ENCODE measurements at regions of chr7 and their contacts with region 1.

Region 1: DNA sequence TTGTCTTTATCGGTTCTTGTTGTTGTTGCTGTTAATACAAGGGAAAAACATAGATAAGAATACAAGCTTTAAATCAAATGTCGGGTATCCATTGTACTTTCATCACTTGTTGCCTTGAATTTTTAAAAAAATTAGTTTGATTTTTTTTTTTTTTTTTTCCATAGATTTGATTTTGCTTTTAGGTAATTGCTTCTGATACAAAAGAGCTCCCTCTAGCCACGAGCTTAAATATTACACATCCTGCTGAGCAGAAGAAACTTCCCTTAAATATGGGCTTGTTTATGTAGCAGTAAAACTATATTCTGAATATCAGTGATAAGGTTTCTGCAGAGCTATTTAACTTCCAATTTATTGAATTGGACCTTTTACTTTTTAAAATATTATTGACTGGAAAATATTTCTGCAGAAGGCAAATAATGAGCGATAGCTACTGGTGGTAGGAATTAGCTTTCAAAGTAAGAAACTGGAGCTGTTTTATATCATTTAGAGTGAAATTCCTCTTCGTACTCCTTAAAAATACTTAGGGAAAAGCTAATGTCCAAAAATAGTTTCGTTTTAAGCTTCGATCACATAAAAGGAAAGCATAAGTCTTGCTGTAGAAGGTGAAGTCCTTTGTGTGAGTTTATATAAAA is 216.9 kb downstream of the POLR1F start:
- DNase-seq: peak; percentile 66
- ATAC-seq: 0 out of 2 replicates have a peak, but pooled peaks have one; percentile 35
- H3K4me3 ChIP-seq: no peak overlapping the region
- H3K27ac ChIP-seq: no peak overlapping the region
- H3K4me1 ChIP-seq: no peaks in the 10 kb centered on the region
- H3K27me3 ChIP-seq: 0 out of 2 replicates have a peak, but pooled peaks cover 4% of the 10 kb centered on the region
- CTCF ChIP-seq: peak; percentile 76

Region 2: GRCh38 chr7:19209166-19209696 is 282.7 kb before region 1 on chr7:
- CTCF ChIA-PET with region 1: interaction called, 12 read pairs
- POLR2A ChIA-PET with region 1: no interaction called
- intact Hi-C with region 1: no loop called
- DNase-seq: no peak
- ATAC-seq: no peak
- H3K4me3 ChIP-seq: no peak overlapping the region
- H3K27ac ChIP-seq: no peak overlapping the region
- H3K4me1 ChIP-seq: no peaks in the 10 kb centered on the region
- H3K27me3 ChIP-seq: no peaks in the 10 kb centered on the region
- CTCF ChIP-seq: no peak

Region 3: DNA sequence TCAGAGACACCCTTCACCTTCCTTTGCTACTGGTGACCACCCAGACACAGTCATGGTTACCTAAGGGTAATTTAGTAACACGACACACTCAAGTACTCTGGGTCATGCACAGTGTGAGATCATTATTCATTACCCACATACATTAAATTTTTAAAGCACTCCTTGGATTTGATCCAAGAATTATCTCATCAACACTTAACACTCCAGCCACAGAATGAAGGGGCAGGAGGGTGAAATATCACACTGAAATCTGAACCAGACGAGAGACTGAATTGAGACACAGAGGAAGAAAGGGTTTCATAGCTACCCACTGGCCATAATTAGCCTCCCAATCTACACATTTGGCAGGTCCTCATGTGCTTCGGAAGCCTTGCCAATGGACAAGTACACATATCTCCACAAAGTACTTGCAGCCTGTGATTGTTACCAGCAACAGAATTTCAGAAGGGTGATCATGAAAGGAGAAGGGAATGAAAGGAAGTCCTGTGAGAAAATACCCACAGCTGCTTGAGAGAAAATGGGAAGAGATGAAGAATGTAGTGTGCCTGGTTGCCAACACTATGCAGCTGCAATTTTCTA is 27.6 kb after region 1 on chr7:
- CTCF ChIA-PET with region 1: interaction called, 12 read pairs
- POLR2A ChIA-PET with region 1: no interaction called
- intact Hi-C with region 1: no loop called
- DNase-seq: no peak
- ATAC-seq: no peak
- H3K4me3 ChIP-seq: no peak overlapping the region
- H3K27ac ChIP-seq: no peak overlapping the region
- H3K4me1 ChIP-seq: peaks cover 10% of the 10 kb centered on the region
- H3K27me3 ChIP-seq: no peaks in the 10 kb centered on the region
- CTCF ChIP-seq: no peak

Region 4: GRCh38 chr7:19621740-19622139 is 129.8 kb after region 1 on chr7:
- CTCF ChIA-PET with region 1: no interaction called
- POLR2A ChIA-PET with region 1: no interaction called
- intact Hi-C with region 1: loop called (anchors 5 kb)
- DNase-seq: peak; percentile 72
- ATAC-seq: peak; percentile 94
- H3K4me3 ChIP-seq: 0 out of 2 replicates have a peak overlapping the region, but pooled peaks have one; percentile 19
- H3K27ac ChIP-seq: no peak overlapping the region
- H3K4me1 ChIP-seq: 0 out of 2 replicates have a peak, but pooled peaks cover 4% of the 10 kb centered on the region
- H3K27me3 ChIP-seq: peaks cover 12% of the 10 kb centered on the region; the same call in 1 of the 2 replicates
- CTCF ChIP-seq: peak; percentile 66

Region 5: DNA sequence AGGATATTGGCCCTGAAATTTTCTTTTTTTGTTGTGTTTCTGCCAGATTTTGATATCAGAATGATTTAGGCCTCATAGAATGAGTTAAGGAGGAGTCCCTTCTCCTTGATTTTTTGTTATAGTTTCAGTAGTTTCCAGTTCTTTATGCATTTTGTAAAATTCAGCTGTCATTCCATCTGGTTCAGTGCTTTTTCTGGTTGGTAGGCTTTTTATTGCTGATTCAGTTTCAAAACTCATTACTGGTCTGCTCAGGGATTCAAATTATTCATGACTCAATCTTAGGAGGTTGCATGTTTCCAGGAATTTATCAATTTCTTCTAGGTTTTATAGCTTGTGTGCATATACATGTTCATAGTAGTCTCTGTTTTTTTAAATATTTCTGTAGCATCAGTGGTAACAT is 291.6 kb after region 1 on chr7:
- CTCF ChIA-PET with region 1: no interaction called
- POLR2A ChIA-PET with region 1: no interaction called
- intact Hi-C with region 1: no loop called
- DNase-seq: no peak
- ATAC-seq: no peak
- H3K4me3 ChIP-seq: no peak overlapping the region
- H3K27ac ChIP-seq: no peak overlapping the region
- H3K4me1 ChIP-seq: no peaks in the 10 kb centered on the region
- H3K27me3 ChIP-seq: no peaks in the 10 kb centered on the region
- CTCF ChIP-seq: no peak